ENCODE measurements at regions of chrX and their contacts with region 1.

Region 1: GRCh38 chrX:72258174-72258573 is 18.9 kb downstream of the RPS4X start:
- DNase-seq: peak; percentile 84
- ATAC-seq: peak; percentile 89
- H3K4me3 ChIP-seq: no peak overlapping the region
- H3K27ac ChIP-seq: peak overlapping the region; percentile 30
- H3K4me1 ChIP-seq: peaks cover 8% of the 10 kb centered on the region
- H3K27me3 ChIP-seq: peaks cover 28% of the 10 kb centered on the region
- CTCF ChIP-seq: no peak
- POLR2A ChIP-seq: no peak
- RAD21 ChIP-seq: no peak

Region 2: DNA sequence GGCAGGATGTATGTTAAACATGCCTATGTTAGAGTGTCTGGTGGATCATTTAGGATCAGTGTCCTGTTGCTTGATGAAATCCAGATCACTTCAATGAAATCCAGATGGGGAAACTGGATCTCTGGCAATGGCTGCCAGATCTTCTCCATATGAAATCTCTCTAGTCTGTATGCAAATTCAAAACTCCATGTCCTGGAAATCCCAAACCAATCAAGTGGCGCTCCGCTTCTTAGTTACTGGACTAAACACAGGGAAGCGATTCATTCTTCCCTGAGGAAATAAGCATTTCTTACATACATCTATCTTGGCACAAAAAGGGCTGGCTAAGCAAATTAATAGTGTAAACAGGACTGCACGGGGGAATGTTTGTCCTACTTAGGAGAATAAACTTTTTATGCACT is 219.6 kb after region 1 on chrX:
- CTCF ChIA-PET with region 1: no interaction called
- POLR2A ChIA-PET with region 1: no interaction called
- dilution Hi-C with region 1: no loop called
- in situ Hi-C with region 1: no loop called
- intact Hi-C with region 1: loop called (anchors 10 kb)
- DNase-seq: no peak
- ATAC-seq: no peak
- H3K4me3 ChIP-seq: no peak overlapping the region
- H3K27ac ChIP-seq: no peak overlapping the region
- H3K4me1 ChIP-seq: no peaks in the 10 kb centered on the region
- H3K27me3 ChIP-seq: peaks cover 5% of the 10 kb centered on the region
- CTCF ChIP-seq: no peak
- POLR2A ChIP-seq: no peak
- RAD21 ChIP-seq: no peak

Measured in IMR-90 (cell line).